Common myeloid progenitor, CD34-positive (primary cell): ENCODE measurements at regions of chr11 and their contacts with region 1.

Region 1: DNA sequence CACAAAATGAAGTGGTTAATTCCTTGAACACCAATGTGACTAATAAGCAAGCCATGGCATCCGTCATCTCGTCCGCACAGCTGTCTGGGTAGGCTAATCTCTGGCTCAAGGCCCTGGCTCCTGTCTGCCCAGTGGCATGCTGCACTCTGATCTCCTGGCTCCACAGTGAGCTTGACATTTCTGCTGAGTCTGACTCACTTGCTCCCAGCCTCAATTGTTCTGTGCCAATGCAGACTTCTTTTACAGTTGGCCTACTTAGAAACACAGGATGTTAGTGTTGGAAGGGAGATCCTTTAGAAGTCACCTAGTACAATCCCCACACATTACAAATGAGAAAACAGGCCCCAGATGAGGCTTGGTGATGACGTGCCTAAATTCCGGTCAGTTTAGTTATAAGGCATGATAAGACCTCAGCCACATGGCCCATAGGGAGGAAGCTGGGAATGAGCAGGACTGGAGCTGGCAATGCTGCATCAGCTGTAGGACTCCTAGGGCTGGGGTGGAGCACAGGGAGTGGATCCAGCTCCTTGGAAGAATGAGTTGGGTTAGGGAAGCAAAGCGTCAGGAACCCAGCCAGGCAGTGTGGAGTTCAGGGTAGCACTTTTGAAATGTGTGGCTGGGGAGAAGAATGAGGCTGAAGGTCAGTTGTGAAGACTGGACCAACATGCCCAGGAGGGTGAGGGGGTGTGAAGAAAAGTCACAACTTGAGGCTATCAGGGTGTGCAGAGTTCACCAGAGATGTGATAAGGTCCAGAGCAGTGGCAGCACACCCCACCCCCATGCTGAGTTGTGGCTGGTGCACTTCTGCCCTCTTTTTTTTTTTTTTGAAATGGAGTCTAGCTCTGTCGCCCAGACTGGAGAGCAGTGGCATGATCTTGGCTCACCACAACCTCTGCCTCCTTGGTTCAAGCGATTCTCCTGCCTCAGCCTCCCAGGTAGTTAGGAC is 70.2 kb upstream of the EED start:
- DNase-seq: peak in 2 of 3 donors; percentile 51 to 71
- H3K4me3 ChIP-seq: no peak overlapping the region
- H3K27ac ChIP-seq: peak overlapping the region in 1 of 2 experiments; percentile 53
- H3K4me1 ChIP-seq: peaks cover 6 to 58% (median 46%) of the 10 kb centered on the region in 4 experiments
- H3K27me3 ChIP-seq: no peaks in the 10 kb centered on the region

Region 2: DNA sequence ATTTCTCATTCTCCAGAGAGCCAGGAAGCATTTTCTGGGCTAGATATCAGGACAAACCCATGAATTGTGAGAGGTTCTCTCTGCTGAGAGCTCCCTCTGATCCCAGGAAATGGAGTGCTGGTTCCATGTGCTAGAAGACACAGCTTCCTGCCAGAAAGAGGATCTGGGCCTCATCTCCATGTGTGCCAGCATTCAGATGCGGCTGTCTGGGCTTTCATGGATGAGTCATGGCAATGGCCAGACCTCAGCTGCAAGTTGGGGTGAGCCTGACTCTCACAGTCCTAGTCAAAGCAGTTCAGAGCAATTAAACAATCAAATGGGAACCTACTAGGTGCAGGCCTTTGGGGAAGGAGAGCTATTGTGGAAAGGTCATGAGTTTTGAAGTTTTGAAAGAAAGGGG is 12.1 kb before region 1 on chr11:
- CTCF ChIA-PET with region 1: interaction called, 12 read pairs
- POLR2A ChIA-PET with region 1: interaction called, 3 read pairs
- DNase-seq: peak in 2 of 3 donors; percentile 72 to 82
- H3K4me3 ChIP-seq: no peak overlapping the region
- H3K27ac ChIP-seq: peak overlapping the region in 1 of 2 experiments; percentile 27
- H3K4me1 ChIP-seq: peaks cover 14 to 56% (median 37%) of the 10 kb centered on the region in 4 experiments
- H3K27me3 ChIP-seq: no peaks in the 10 kb centered on the region